GM13976 (cell line): ENCODE measurements at regions of chr2 and their contacts with region 1.

Region 1: DNA sequence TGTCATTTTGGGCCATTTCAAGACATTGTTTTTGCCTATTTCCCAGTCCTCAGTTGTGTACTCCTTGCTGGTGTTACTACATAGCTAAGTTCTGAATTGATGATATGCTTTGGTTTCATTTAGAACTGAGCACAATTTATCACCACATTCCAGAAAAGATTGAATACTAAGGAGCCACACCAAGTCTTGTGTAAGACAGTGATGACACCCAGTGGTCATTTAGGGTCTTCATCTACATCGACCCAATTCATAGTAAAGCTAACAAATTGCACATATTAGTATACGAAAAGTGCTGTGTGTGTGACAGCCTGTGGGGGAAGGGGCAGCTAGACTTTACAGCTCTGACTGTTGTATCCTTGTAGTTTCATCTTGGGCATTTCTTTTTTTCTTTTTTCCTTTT is 10.9 kb upstream of the DLX2 start:
- DNase-seq: peak; percentile 27
- CTCF ChIP-seq: peak; percentile 14

Region 2: GRCh38 chr2:171587567-171587966 is 526.0 kb before region 1 on chr2:
- in situ Hi-C with region 1: loop called (anchors 10 kb)
- DNase-seq: no peak
- CTCF ChIP-seq: no peak